Left lung (tissue), 14 donors: ENCODE measurements at regions of chr1 and their contacts with region 1.

Region 1: GRCh38 chr1:34865981-34866761 is 6.6 kb upstream of the SMIM12 start:
- DNase-seq: peak; percentile 76 to 98 (median 84)
- ATAC-seq: peak; percentile 91
- H3K4me3 ChIP-seq: peak overlapping the region; percentile 77 to 80
- H3K27ac ChIP-seq: peak overlapping the region; percentile 77 to 85
- H3K4me1 ChIP-seq: peaks cover 0 to 21% of the 10 kb centered on the region in 2 donors
- H3K27me3 ChIP-seq: peaks cover 0 to under 1% of the 10 kb centered on the region in 2 donors
- CTCF ChIP-seq: peak; percentile 96 to 97

Region 2: GRCh38 chr1:34786521-34787325 is 79.4 kb before region 1 on chr1:
- intact Hi-C with region 1: loop called in 1 of 2 experiments (anchors 5 kb)
- DNase-seq: peak in 3 of 4 donors; percentile 19 to 66 (median 54)
- ATAC-seq: peak; percentile 89
- H3K4me3 ChIP-seq: no peak overlapping the region
- H3K27ac ChIP-seq: no peak overlapping the region
- H3K4me1 ChIP-seq: peaks cover 0 to 3% of the 10 kb centered on the region in 2 donors
- H3K27me3 ChIP-seq: peaks cover 4 to 34% of the 10 kb centered on the region in 2 donors
- CTCF ChIP-seq: peak; percentile 73 to 81